ENCODE measurements at regions of chr5 and their contacts with region 1.

Region 1: GRCh38 chr5:80487829-80488721 is at the start of gene FAM151B:
- DNase-seq: peak; percentile 89
- ATAC-seq: peak; percentile 97
- total RNA-seq, gene FAM151B: 1.5 TPM

Region 2: DNA sequence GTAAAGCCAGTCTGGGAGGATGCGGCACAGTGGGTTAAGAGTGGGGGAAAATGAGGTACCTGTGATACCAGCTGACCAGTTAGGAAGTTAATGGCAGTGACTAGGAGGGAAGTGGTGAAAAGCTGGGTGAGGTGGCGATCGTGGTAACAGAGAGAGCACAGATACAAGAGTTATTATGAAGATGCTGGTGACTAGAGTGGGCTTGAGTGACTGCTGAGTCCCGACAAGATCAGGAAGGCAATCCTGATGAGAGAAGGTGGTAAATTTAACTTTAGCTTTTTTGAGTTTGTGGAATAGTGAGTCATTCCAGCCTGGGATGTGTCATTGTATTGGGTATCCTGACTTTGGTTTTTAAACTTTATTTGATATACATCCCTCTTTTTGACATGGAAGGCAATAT is 759.7 kb before region 1 on chr5:
- intact Hi-C with region 1: no loop called
- DNase-seq: no peak
- ATAC-seq: no peak

Region 3: DNA sequence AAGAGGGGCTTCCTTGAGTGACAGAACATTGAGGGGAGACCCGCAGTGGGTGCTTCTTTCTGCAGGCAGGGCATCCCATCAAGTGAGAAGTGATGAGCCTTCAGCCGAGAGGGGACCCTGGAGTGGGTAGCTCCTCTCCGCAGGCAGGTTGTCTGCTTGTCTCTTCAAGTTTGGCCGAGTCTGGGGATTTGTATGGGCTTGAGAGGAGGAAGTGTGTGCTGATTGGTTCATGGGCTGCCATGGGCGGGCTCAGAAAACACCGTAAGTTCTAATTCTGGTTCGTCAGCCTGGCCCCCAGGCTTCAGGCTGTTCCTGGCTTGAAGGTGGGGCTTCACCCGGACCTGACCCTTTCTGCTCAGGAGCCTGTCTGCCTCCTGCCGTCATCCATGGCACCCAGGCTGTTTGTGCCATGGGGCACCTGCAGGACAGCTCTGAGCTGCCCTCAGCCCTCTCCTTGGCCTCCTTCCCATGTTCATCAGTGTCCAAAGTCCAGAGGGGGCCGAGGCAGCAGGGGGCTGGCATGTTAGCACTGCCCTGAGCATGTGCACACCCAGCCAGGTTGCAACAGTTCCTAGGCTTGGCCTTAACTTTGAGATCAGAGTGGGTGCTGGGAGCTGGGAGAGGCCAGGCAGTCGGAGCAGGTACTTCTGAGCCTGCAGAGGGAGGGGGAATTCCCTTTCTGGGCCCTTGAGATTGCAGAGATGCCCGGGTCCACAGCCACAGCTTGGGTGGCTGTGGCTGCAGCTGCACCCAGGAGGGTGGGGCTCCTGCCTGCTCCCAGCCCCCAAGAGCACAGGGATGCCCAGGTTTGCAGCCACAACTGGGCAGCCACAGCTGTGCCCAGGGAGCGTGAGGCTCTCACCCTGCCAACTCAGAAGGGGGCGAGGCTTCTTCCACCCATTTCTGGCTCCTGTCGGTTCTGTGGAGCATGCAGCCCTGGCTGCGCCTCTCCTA is 180.2 kb after region 1 on chr5:
- intact Hi-C with region 1: loop called (anchors 10 kb)
- DNase-seq: peak; percentile 49
- ATAC-seq: peak; percentile 67

Region 4: GRCh38 chr5:81194633-81195333 is 706.7 kb after region 1 on chr5:
- intact Hi-C with region 1: loop called (anchors 10 kb)
- DNase-seq: peak; percentile 91
- ATAC-seq: peak; percentile 98

Measured in Right ventricle myocardium superior (tissue), 1 donor.